ENCODE measurements at regions of chr14 and their contacts with region 1.

Region 1: DNA sequence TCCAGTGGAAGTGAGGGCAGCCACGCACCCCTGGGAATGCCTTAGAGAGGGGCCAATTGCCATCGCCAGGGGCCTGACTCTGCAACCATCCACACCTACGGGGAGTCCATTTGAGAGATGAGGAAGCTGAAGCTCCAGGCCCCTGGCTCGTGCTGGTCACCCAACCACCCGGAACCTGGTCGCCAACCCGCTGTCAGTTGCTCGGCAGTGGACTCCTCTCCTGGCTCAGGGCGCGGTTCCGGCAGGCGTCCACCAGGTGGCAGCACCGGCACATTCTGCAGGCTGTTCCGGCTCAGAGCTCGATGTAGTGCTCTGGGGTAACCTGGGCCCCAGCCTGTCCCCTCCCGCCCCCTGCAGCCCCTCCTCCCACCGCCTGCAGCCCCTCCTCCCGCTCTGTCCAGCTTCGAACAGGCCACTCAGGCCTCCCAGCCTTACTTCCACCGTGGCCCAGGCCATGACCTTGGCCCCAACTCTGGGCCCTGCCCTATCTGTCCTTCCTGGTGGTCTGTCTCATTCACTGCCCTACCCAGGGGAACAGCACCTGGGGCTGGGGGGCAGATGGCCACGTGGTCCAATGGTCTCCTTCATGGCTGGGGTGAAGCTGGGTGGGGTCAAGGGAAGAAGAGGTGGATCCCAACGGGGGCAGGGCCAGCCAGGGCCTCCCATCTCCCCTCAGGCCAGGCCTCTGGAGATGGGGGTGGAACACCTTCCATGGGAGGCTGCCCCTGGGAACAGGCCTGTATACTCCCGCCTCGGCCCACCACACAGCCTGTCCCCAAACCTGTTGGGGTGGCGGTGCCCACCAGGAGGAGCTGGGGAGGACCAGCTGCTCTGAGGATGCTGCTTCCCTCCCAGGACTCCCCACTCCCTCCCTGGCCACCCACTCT is 15.7 kb downstream of the SIVA1 start:
- DNase-seq: peak; percentile 88

Region 2: GRCh38 chr14:104694991-104695659 is 73.6 kb before region 1 on chr14:
- CTCF ChIA-PET with region 1: no interaction called
- POLR2A ChIA-PET with region 1: no interaction called
- DNase-seq: no peak

Region 3: DNA sequence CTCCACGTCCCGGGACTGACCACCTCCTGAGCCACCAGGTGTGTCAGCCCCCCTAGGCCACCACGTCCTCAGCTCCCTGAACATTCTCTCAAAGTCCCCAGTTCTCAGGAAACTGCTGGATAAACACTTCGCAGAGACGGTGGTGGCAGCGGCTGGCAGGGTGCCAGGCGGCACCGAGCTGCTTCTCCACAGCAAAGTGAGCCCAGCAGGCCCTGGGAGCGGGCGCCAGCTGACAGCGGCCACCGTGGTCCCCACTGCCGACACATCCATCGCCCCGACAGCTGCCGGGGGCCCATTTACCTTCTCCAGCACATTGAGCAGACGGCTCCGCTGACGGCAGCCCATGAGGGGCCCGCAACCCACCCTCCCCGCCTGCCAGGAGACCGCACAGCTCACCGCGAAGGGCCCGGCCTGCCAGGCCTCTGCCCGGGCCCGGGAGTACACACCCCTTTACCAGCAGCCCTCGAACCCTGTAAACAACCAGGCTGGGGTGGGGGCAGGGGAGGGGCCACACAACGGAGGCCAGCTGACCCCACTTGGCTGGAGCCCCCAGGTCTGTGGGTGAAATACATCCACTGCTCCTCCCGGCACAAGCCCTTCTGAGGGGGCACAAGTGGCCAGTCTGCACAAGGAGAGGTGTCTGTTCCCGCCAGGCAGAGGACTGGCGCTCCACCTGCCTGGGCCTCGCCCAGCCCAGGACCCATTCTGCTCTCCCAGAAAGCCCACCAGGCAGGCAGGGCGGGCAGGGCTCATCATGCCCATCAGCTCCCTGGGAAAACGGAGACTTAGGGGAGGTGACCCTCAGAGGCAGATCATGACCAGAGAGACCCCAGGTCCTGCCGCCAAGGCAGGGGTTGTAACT is 16.4 kb after region 1 on chr14:
- CTCF ChIA-PET with region 1: no interaction called
- POLR2A ChIA-PET with region 1: no interaction called
- DNase-seq: no peak

Region 4: GRCh38 chr14:104820669-104821228 is 52.1 kb after region 1 on chr14:
- CTCF ChIA-PET with region 1: interaction called, 13 read pairs
- POLR2A ChIA-PET with region 1: interaction called, 8 read pairs
- DNase-seq: no peak

Region 5: DNA sequence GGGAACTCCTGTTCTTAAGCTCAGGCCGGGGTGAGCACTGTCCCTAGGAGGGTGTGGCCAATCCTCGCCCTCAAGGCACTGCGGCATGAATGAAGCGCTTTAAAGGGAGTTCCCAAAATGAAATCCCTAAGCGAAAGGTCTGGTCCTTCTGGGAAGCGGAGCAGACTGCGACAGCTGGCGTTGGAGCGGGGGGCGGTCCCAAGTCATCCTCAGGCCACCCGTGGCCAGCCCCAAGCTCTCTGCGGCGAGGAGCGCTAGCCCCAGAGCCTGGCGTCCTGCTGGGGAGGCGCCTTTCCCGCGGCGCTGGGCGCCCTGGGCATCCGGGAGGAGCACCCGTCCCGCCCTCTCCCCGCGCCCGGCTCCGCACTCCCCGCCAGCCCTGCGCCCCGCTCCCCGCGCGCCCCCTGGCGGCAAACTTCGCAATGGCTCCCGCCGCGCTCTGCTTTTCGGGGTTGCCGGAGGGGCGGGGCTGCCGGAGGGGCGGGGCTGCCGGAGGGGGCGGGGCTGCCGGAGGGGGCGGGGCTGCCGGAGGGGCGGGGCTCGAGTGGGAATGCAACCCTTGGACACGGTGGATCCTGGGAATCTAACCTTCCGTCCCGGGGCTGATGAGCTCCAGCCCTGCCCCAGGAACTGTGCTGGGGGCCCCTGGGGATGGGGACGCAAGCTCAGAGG is 57.6 kb after region 1 on chr14:
- CTCF ChIA-PET with region 1: interaction called, 13 read pairs
- POLR2A ChIA-PET with region 1: interaction called, 8 read pairs
- DNase-seq: peak; percentile 93